Calu3 (cell line): ENCODE measurements at regions of chr15 and their contacts with region 1.

Region 1: GRCh38 chr15:55917881-55918296 is 75.5 kb downstream of the NEDD4 start:
- DNase-seq: peak; percentile 72
- H3K4me3 Mint-ChIP-seq: no peak overlapping the region
- H3K27ac Mint-ChIP-seq: peak overlapping the region; percentile 55
- H3K4me1 Mint-ChIP-seq: peaks cover 38% of the 10 kb centered on the region
- H3K27me3 Mint-ChIP-seq: no peaks in the 10 kb centered on the region
- CTCF ChIP-seq: peak; percentile 55

Region 2: DNA sequence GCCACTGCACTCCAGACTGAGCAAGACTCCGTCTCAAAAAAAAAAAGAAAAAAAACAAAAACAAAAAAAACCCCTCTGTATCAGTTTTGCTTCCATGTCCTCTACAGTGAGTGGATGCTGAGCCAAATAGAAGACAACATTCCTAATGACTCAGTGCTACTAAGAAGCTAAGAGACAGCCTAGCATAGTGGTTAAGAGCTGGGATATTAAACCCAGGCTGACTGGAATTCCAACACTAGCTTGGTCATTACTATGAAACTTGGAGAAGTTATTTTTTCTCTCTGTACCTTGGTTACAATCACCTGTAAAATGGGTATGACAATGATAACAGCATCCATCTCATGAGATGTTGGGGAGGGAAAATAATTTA is 268.9 kb before region 1 on chr15:
- CTCF ChIA-PET with region 1: interaction called, 4 read pairs
- intact Hi-C with region 1: loop called (anchors 2 kb)
- DNase-seq: no peak
- H3K4me3 Mint-ChIP-seq: no peak overlapping the region
- H3K27ac Mint-ChIP-seq: no peak overlapping the region
- H3K4me1 Mint-ChIP-seq: no peaks in the 10 kb centered on the region
- H3K27me3 Mint-ChIP-seq: no peaks in the 10 kb centered on the region
- CTCF ChIP-seq: no peak

Region 3: DNA sequence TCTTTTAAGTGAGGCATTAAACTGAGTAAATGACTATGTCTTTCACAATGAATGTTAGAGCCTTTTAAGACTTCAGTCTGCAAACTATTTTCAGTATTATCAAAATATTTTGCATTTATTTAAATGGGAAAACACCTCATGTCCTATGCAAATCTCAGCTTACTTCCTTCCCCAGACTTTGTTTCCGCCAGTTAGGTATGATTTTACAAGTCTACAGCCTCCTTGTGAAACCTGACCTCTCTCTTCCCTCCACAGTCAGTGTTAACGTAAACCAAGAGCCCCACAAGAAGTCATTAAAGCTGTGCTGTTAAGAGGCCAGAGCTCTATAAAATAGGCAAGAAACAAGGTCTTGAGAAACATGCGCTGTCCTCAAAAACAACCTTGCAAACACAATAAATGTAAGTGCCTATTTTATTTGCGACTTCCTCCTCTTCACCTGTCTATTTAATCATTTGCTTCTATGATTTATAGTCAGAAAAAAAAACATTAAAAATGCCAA is 223.2 kb before region 1 on chr15:
- CTCF ChIA-PET with region 1: no interaction called
- intact Hi-C with region 1: loop called (anchors 5 kb)
- DNase-seq: peak; percentile 47
- H3K4me3 Mint-ChIP-seq: peak overlapping the region; percentile 59
- H3K27ac Mint-ChIP-seq: peak overlapping the region; percentile 87
- H3K4me1 Mint-ChIP-seq: peaks cover 29% of the 10 kb centered on the region
- H3K27me3 Mint-ChIP-seq: no peaks in the 10 kb centered on the region
- CTCF ChIP-seq: no peak

Region 4: GRCh38 chr15:55897560-55898336 is 20.1 kb before region 1 on chr15:
- CTCF ChIA-PET with region 1: interaction called, 23 read pairs
- intact Hi-C with region 1: loop called (anchors 2 kb)
- DNase-seq: peak; percentile 70
- H3K4me3 Mint-ChIP-seq: no peak overlapping the region
- H3K27ac Mint-ChIP-seq: peak overlapping the region; percentile 29
- H3K4me1 Mint-ChIP-seq: peaks cover 13% of the 10 kb centered on the region
- H3K27me3 Mint-ChIP-seq: no peaks in the 10 kb centered on the region
- CTCF ChIP-seq: peak; percentile 79

Region 5: GRCh38 chr15:55969566-55969965 is 51.7 kb after region 1 on chr15:
- CTCF ChIA-PET with region 1: no interaction called
- intact Hi-C with region 1: no loop called
- DNase-seq: no peak
- H3K4me3 Mint-ChIP-seq: no peak overlapping the region
- H3K27ac Mint-ChIP-seq: no peak overlapping the region
- H3K4me1 Mint-ChIP-seq: peaks cover 21% of the 10 kb centered on the region
- H3K27me3 Mint-ChIP-seq: no peaks in the 10 kb centered on the region
- CTCF ChIP-seq: no peak

Region 6: GRCh38 chr15:55993111-55993803 is 75.4 kb after region 1 on chr15 and contains the start of gene NEDD4:
- CTCF ChIA-PET with region 1: interaction called, 5 read pairs
- intact Hi-C with region 1: loop called (anchors 5 kb)
- DNase-seq: peak; percentile 93
- H3K4me3 Mint-ChIP-seq: peak within 1 kb of the TSS; percentile 89
- H3K27ac Mint-ChIP-seq: peak within 1 kb of the TSS; percentile 86
- H3K4me1 Mint-ChIP-seq: peaks cover 42% of the 10 kb centered on the region
- H3K27me3 Mint-ChIP-seq: no peaks in the 10 kb centered on the region
- CTCF ChIP-seq: peak; percentile 59
- total RNA-seq, gene NEDD4: 48.0 and 56.8 TPM in 2 replicates

Region 7: GRCh38 chr15:56040081-56041035 is 122.5 kb after region 1 on chr15:
- CTCF ChIA-PET with region 1: interaction called, 5 read pairs
- intact Hi-C with region 1: loop called (anchors 5 kb)
- DNase-seq: peak; percentile 89
- H3K4me3 Mint-ChIP-seq: peak overlapping the region; percentile 50
- H3K27ac Mint-ChIP-seq: peak overlapping the region; percentile 96
- H3K4me1 Mint-ChIP-seq: peaks cover 79% of the 10 kb centered on the region
- H3K27me3 Mint-ChIP-seq: no peaks in the 10 kb centered on the region
- CTCF ChIP-seq: no peak